A673 (cell line): ENCODE measurements at regions of chr3 and their contacts with region 1.

Region 1: DNA sequence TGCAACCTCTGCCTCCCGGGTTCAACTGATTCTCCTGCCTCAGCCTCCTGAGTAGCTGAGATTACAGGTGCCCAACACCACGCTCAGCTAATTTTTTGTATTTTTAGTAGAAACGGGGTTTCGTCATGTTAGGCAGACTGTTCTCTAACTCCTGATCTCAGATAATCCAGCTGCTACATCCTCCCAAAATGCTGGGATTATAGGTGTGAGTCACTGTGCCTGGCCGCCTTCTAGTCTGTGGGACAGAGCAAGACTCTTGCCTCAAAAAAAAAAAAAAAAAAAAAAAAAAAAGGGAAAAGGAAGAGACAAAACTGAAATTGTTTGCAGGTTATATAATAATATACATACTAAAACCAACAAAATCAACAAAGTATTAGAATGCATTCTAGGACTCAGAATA is 215.2 kb downstream of the PCCB start:
- DNase-seq: no peak
- H3K4me3 ChIP-seq: no peak overlapping the region
- H3K27ac ChIP-seq: no peak overlapping the region
- H3K4me1 ChIP-seq: no peaks in the 10 kb centered on the region
- H3K27me3 ChIP-seq: no peaks in the 10 kb centered on the region
- CTCF ChIP-seq: no peak

Region 2: DNA sequence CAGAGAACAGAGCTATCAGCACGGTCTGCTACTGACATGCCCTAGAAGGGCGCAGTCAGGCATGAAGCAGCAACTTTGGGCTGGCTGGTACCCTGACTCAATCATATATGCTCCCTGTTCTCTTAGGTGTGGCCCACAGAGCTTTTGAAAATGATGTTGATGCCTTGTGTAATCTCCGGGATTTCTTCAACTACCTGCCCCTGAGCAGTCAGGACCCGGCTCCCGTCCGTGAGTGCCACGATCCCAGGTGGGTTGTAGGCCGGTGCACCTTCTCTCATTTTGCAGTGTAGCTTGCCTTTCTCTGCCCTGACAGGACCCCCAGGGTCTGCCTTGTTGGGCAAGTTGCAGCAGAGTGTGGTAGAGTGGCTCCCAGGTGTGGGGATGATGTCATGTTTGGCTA is 167.5 kb before region 1 on chr3:
- CTCF ChIA-PET with region 1: interaction called, 16 read pairs
- POLR2A ChIA-PET with region 1: no interaction called
- intact Hi-C with region 1: no loop called
- DNase-seq: no peak
- H3K4me3 ChIP-seq: no peak overlapping the region
- H3K27ac ChIP-seq: no peak overlapping the region
- H3K4me1 ChIP-seq: no peaks in the 10 kb centered on the region
- H3K27me3 ChIP-seq: no peaks in the 10 kb centered on the region
- CTCF ChIP-seq: no peak